GM12878 (cell line): ENCODE measurements at regions of chr1 and their contacts with region 1.

Region 1: DNA sequence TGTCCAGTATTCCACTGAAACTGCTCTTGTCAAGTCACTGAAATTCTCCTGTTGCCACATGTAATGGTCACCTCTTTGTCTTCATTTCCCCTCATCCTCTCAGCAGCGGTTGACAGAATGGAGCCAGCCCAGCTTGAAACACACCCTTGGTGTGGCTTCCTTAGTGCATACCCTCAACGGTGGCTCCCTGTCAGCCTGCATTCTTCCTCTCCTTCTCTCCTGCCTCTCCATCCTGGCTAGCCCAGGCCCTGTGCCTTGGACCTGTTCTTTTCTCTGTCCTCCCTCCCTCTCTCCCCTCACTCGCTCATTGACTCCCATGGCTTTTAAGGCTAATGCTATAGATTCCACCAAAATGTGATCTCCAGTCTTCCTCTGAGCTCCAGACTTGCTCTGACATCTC is 3.7 kb downstream of the FCMR start:
- DNase-seq: no peak
- ATAC-seq: no peak
- H3K4me3 ChIP-seq: peak overlapping the region; percentile 86
- H3K27ac ChIP-seq: peak overlapping the region; percentile 99
- H3K4me1 ChIP-seq: peaks cover 39% of the 10 kb centered on the region
- H3K27me3 ChIP-seq: no peaks in the 10 kb centered on the region
- CTCF ChIP-seq: no peak
- EP300 ChIP-seq: no peak
- POLR2A ChIP-seq: no peak
- RAD21 ChIP-seq: no peak

Region 2: GRCh38 chr1:206514821-206515387 is 403.2 kb before region 1 on chr1:
- CTCF ChIA-PET with region 1: no interaction called
- POLR2A ChIA-PET with region 1: no interaction called
- RAD21 ChIA-PET with region 1: no interaction called
- SMC1A ChIA-PET with region 1: no interaction called
- in situ Hi-C with region 1: no loop called
- intact Hi-C with region 1: no loop called
- DNase-seq: no peak
- ATAC-seq: no peak
- H3K4me3 ChIP-seq: no peak overlapping the region
- H3K27ac ChIP-seq: no peak overlapping the region
- H3K4me1 ChIP-seq: peaks cover 7% of the 10 kb centered on the region; the same call in 1 of the 2 replicates
- H3K27me3 ChIP-seq: no peaks in the 10 kb centered on the region
- CTCF ChIP-seq: no peak
- EP300 ChIP-seq: no peak
- POLR2A ChIP-seq: no peak
- RAD21 ChIP-seq: no peak

Region 3: GRCh38 chr1:206694171-206695124 is 223.6 kb before region 1 on chr1:
- CTCF ChIA-PET with region 1: no interaction called
- POLR2A ChIA-PET with region 1: no interaction called
- RAD21 ChIA-PET with region 1: no interaction called
- SMC1A ChIA-PET with region 1: no interaction called
- in situ Hi-C with region 1: no loop called
- intact Hi-C with region 1: no loop called
- DNase-seq: no peak
- ATAC-seq: no peak
- H3K4me3 ChIP-seq: no peak overlapping the region
- H3K27ac ChIP-seq: no peak overlapping the region
- H3K4me1 ChIP-seq: peaks cover 22% of the 10 kb centered on the region
- H3K27me3 ChIP-seq: no peaks in the 10 kb centered on the region
- CTCF ChIP-seq: no peak
- EP300 ChIP-seq: no peak
- POLR2A ChIP-seq: no peak
- RAD21 ChIP-seq: no peak

Region 4: DNA sequence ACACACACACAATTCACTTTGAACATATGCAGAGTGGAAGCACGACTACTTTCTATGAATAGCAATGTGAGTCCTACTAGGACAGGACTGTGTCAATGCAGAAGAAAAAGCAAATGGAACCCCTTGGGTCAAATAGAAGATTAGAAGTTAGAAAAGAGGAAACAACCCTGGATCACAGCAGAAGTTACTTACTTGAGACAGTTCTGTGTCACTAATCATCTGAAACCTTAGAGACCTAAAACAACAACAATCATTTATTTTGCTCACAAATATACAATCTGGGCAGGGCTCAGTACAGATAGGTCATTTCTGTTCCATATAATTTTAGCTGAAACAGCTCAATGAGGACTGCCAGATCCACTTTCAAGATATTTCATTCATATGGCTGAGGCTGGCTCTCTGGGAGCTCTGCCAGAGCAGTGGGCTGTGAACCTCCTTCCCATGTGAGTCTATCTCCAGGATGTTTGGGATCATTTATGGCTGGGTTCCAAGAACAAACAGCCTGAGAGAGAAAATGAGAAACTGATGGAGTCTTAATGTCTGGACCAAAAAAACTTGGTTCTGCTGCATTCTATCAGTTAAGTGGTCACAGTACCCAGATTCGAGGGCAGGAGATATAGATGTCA is 103.2 kb before region 1 on chr1:
- CTCF ChIA-PET with region 1: interaction called, 137 read pairs
- POLR2A ChIA-PET with region 1: no interaction called
- RAD21 ChIA-PET with region 1: interaction called, 35 read pairs
- SMC1A ChIA-PET with region 1: interaction called, 64 read pairs
- in situ Hi-C with region 1: loop called (anchors 5 kb)
- intact Hi-C with region 1: no loop called
- DNase-seq: no peak
- ATAC-seq: peak; percentile 42
- H3K4me3 ChIP-seq: no peak overlapping the region
- H3K27ac ChIP-seq: no peak overlapping the region; the same call in 1 of the 2 replicates
- H3K4me1 ChIP-seq: peaks cover 27% of the 10 kb centered on the region
- H3K27me3 ChIP-seq: no peaks in the 10 kb centered on the region
- CTCF ChIP-seq: no peak
- EP300 ChIP-seq: no peak
- POLR2A ChIP-seq: no peak
- RAD21 ChIP-seq: no peak